ENCODE measurements at regions of chr2 and their contacts with region 1.

Region 1: DNA sequence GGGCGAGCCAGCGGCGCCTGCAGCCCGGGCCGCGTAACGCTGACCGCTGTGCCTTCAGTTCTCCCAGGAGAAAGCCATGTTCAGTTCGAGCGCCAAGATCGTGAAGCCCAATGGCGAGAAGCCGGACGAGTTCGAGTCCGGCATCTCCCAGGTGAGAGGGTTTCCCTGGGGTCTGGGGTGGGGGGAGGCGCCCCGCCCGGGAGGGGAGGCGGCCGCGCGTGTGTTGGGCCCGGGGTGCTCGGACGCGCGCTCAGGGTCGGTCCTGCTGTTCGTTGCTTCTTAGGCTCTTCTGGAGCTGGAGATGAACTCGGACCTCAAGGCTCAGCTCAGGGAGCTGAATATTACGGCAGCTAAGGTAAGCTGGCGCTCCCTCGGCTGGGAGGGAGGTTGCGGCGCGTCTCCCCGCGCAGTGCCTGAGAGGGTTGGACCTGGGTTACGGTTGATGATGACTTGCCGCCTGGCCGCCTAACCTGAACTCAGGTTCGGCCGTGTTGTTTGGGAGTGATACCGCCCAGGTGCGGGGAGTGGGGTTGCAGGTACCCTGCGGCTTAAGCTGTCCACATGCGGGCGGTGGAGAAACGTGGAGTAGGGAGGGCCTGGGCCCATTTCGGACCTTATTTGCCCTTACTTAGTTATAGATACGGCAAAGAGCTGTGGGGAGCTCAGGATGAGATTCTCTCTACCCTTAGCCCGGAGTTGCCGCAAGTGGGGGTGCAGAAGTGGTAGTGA is 638 bp downstream of the RPS7 start:
- DNase-seq: peak; percentile 27
- H3K4me3 Mint-ChIP-seq: peak overlapping the region; percentile 88
- H3K27ac Mint-ChIP-seq: peak overlapping the region; percentile 91
- H3K4me1 Mint-ChIP-seq: peaks cover 50% of the 10 kb centered on the region
- H3K27me3 Mint-ChIP-seq: no peaks in the 10 kb centered on the region

Region 2: DNA sequence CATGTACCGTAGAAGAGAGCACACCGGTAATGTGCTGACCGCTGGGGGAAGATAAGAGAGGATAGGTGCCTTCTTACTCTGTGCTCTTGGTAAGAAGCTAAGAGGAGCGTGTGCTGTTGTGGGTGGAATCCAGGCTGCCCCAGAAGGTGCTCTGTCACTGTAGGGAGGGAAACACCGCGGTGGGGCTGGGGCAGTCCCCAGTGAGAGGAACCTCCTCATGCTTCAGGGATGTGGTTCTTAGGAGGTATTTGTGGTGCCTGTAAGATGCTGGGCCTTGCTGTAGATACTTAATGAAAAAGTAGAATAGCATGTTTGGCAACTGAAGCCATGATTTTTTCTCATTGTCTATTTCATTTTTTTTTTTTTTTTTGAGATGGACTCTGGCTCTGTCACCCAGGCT is 20.3 kb after region 1 on chr2:
- CTCF ChIA-PET with region 1: no interaction called
- intact Hi-C with region 1: loop called (anchors 2 kb)
- DNase-seq: peak; percentile 83
- H3K4me3 Mint-ChIP-seq: no peak overlapping the region
- H3K27ac Mint-ChIP-seq: peak overlapping the region; percentile 24
- H3K4me1 Mint-ChIP-seq: peaks cover 29% of the 10 kb centered on the region
- H3K27me3 Mint-ChIP-seq: peaks cover 9% of the 10 kb centered on the region

Region 3: DNA sequence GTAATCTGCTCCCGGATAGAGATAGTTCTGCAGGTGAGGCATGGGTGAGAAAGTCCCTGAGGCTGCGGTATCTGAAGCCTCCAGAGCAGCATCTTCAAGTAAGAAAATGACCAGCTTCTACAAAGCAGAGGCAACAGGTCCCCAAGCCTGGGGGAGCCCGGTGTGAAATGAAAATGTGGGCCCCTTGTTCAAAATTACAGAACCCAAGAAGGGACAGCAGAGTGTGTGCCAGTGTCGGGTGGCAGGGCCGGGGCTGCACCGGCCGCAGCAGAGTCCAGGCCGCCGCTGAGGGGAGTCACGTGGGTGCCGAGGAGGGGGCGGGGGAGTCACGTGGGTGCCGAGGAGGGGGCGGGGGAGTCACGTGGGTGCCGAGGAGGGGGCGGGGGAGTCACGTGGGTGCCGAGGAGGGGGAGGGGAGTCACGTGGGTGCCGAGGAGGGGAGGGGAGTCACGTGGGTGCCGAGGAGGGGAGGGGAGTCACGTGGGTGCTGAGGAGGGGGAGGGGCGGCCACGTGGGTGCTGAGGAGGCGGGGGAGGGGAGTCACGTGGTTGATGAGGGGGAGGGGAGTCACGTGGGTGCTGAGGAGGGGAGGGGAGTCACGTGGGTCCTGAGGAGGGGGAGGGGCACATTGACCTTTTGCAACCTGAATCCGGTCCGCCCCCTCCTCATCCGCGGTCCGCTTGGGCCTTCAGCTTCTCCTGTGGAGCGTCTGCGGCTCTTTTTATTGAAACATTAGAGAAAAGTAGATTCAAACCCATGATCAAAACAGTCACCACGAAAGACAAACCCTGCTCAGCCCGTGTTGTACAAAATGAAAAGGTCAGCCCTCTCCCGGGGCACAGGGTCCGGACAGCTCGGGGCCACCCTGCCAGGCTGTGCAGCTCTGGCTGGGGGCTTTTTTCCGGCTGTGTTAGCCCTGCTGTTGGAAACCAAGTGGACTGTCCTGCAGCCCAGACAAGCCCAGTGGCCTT is 29.6 kb after region 1 on chr2:
- CTCF ChIA-PET with region 1: no interaction called
- intact Hi-C with region 1: loop called (anchors 1 kb)
- DNase-seq: peak; percentile 77
- H3K4me3 Mint-ChIP-seq: peak overlapping the region; percentile 68
- H3K27ac Mint-ChIP-seq: peak overlapping the region; percentile 84
- H3K4me1 Mint-ChIP-seq: peaks cover 18% of the 10 kb centered on the region
- H3K27me3 Mint-ChIP-seq: no peaks in the 10 kb centered on the region